K562 (cell line): ENCODE measurements at regions of chr1 and their contacts with region 1.

Region 1: GRCh38 chr1:155001675-155002463 is 733 bp upstream of the ZBTB7B start:
- DNase-seq: peak; percentile 90 to 100 (median 95)
- ATAC-seq: peak; percentile 81
- H3K4me3 ChIP-seq: peak overlapping the region; percentile 71
- H3K27ac ChIP-seq: peak overlapping the region; percentile 97
- H3K4me1 ChIP-seq: peaks cover 37 to 66% of the 10 kb centered on the region in 2 experiments
- H3K27me3 ChIP-seq: no peaks in the 10 kb centered on the region
- CTCF ChIP-seq: peak; percentile 60 to 70 (median 65)
- EP300 ChIP-seq: peak; percentile 32; the same call in 1 of the 2 replicates
- POLR2A ChIP-seq: 0 out of 2 replicates have a peak, but pooled peaks have one; percentile 56
- RAD21 ChIP-seq: peak; percentile 17 to 40; a peak in 2 of 4 replicates

Region 2: DNA sequence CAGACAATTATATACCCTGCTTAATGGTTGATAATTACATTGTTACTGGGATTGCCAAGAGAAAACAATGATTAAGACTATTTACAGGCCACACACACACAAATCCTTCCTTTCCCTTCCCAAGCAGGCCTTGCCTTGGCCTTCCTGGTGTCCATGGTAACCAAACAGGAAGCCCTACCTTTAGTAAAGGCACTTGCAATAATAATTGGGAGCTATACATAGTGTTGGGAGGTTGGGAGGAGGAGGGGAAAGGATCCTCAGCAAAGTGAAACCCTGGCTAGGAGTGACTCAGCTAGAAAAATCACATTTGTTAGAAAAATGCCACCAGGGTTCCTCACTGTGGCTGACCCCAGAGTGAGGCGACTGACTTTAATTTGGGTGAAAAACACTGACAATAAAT is 271.6 kb before region 1 on chr1:
- CTCF ChIA-PET with region 1: no interaction called
- POLR2A ChIA-PET with region 1: no interaction called
- in situ Hi-C with region 1: no loop called
- intact Hi-C with region 1: no loop called
- DNase-seq: no peak
- ATAC-seq: peak; percentile 39; the same call in 1 of the 3 replicates
- H3K4me3 ChIP-seq: no peak overlapping the region
- H3K27ac ChIP-seq: no peak overlapping the region
- H3K4me1 ChIP-seq: peaks cover 2 to 3% of the 10 kb centered on the region in 2 experiments; a peak in 3 of 5 replicates
- H3K27me3 ChIP-seq: peaks cover 30 to 66% of the 10 kb centered on the region in 2 experiments
- CTCF ChIP-seq: no peak
- EP300 ChIP-seq: no peak
- POLR2A ChIP-seq: no peak
- RAD21 ChIP-seq: no peak

Region 3: GRCh38 chr1:154961497-154962262 is 40.2 kb before region 1 on chr1 and contains the start of gene PYGO2:
- CTCF ChIA-PET with region 1: interaction called, 6 read pairs
- POLR2A ChIA-PET with region 1: interaction called, 9 read pairs
- in situ Hi-C with region 1: no loop called
- intact Hi-C with region 1: loop called (anchors 2 kb)
- DNase-seq: peak; percentile 86 to 93 (median 90)
- ATAC-seq: peak; percentile 91
- H3K4me3 ChIP-seq: peak within 1 kb of the TSS; percentile 91
- H3K27ac ChIP-seq: peak within 1 kb of the TSS; percentile 99
- H3K4me1 ChIP-seq: peaks cover 25 to 53% of the 10 kb centered on the region in 2 experiments
- H3K27me3 ChIP-seq: no peaks in the 10 kb centered on the region
- CTCF ChIP-seq: peak; percentile 64 to 86 (median 70)
- EP300 ChIP-seq: no peak
- POLR2A ChIP-seq: peak; percentile 92
- RAD21 ChIP-seq: peak; percentile 74 to 80
- polyA plus RNA-seq, gene PYGO2: 8.3 to 8.6 TPM

Region 4: DNA sequence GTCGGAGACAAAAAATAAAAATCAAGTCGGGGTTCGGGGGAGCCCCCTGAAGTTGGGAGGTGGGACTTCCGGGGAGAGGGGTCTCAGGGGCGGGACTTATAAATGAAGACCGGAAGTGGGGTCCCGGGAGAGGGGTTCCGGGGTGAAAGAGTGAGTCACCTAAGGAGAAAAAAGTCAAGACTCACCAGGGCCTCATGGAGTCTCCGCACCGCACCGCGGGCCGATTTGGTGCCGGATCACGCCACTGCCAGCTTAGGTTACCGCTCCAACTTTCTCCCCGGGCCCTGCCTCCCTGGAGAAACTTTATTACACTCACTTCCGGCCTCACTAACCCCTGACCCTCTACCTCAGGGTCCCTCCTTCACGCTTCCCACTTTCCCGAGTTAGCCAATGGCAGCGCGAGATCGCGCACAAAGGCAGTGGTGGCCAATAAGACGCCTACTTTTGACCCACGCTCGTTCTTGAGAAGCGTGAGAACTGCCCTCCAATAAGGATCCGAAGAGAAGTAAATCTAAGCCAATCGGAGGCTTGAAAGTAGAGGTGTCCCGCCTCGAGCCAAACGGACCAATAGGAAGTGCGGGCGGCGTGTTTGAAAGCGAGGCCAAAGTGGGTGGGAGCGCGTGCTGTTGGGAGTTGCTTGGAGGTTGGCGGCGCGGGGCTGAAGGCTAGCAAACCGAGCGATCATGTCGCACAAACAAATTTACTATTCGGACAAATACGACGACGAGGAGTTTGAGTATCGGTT is 27.6 kb before region 1 on chr1 and contains the start of gene CKS1B:
- CTCF ChIA-PET with region 1: interaction called, 5 read pairs
- POLR2A ChIA-PET with region 1: interaction called, 39 read pairs
- in situ Hi-C with region 1: no loop called
- intact Hi-C with region 1: loop called (anchors 1 kb)
- DNase-seq: peak; percentile 94 to 99 (median 97)
- ATAC-seq: peak; percentile 83
- H3K4me3 ChIP-seq: peak within 1 kb of the TSS; percentile 66
- H3K27ac ChIP-seq: peak within 1 kb of the TSS; percentile 99
- H3K4me1 ChIP-seq: peaks cover 45 to 50% of the 10 kb centered on the region in 2 experiments
- H3K27me3 ChIP-seq: no peaks in the 10 kb centered on the region; a peak in 1 of 5 replicates
- CTCF ChIP-seq: no peak
- EP300 ChIP-seq: no peak; the same call in 1 of the 2 replicates
- POLR2A ChIP-seq: peak; percentile 97
- RAD21 ChIP-seq: no peak
- polyA plus RNA-seq, gene CKS1B: 1,039 to 1,103 TPM

Region 5: GRCh38 chr1:154982897-154983648 is 18.8 kb before region 1 on chr1 and contains the start of gene FLAD1:
- CTCF ChIA-PET with region 1: interaction called, 3 read pairs
- POLR2A ChIA-PET with region 1: interaction called, 80 read pairs
- in situ Hi-C with region 1: no loop called
- intact Hi-C with region 1: no loop called
- DNase-seq: peak; percentile 95 to 99 (median 97)
- ATAC-seq: peak; percentile 98
- H3K4me3 ChIP-seq: peak within 1 kb of the TSS; percentile 60
- H3K27ac ChIP-seq: peak within 1 kb of the TSS; percentile 85
- H3K4me1 ChIP-seq: peaks cover 5 to 27% of the 10 kb centered on the region in 2 experiments; a peak in 4 of 5 replicates
- H3K27me3 ChIP-seq: no peaks in the 10 kb centered on the region
- CTCF ChIP-seq: 0 out of 6 replicates have a peak, but pooled peaks of 1 of the 3 experiments have one; percentile 6
- EP300 ChIP-seq: no peak
- POLR2A ChIP-seq: peak; percentile 95
- RAD21 ChIP-seq: no peak
- polyA plus RNA-seq, gene FLAD1: 24.9 to 46.7 TPM

Region 6: GRCh38 chr1:155017041-155017945 is 15.4 kb after region 1 on chr1:
- CTCF ChIA-PET with region 1: interaction called, 6 read pairs
- POLR2A ChIA-PET with region 1: interaction called, 8 read pairs
- in situ Hi-C with region 1: no loop called
- intact Hi-C with region 1: loop called (anchors 1 kb)
- DNase-seq: peak; percentile 90 to 96 (median 91)
- ATAC-seq: peak; percentile 93
- H3K4me3 ChIP-seq: peak overlapping the region; percentile 31
- H3K27ac ChIP-seq: peak overlapping the region; percentile 81
- H3K4me1 ChIP-seq: peaks cover 28 to 57% of the 10 kb centered on the region in 2 experiments
- H3K27me3 ChIP-seq: no peaks in the 10 kb centered on the region
- CTCF ChIP-seq: peak; percentile 100
- EP300 ChIP-seq: no peak
- POLR2A ChIP-seq: peak; percentile 63
- RAD21 ChIP-seq: peak; percentile 92 to 96

Region 7: GRCh38 chr1:155044812-155045690 is 43.2 kb after region 1 on chr1:
- CTCF ChIA-PET with region 1: no interaction called
- POLR2A ChIA-PET with region 1: interaction called, 3 read pairs
- in situ Hi-C with region 1: no loop called
- intact Hi-C with region 1: loop called (anchors 5 kb)
- DNase-seq: peak; percentile 65 to 81 (median 69)
- ATAC-seq: peak; percentile 93
- H3K4me3 ChIP-seq: no peak overlapping the region
- H3K27ac ChIP-seq: no peak overlapping the region
- H3K4me1 ChIP-seq: peaks cover 17 to 32% of the 10 kb centered on the region in 2 experiments
- H3K27me3 ChIP-seq: no peaks in the 10 kb centered on the region; a peak in 1 of 5 replicates
- CTCF ChIP-seq: peak; percentile 76 to 92 (median 84)
- EP300 ChIP-seq: no peak
- POLR2A ChIP-seq: no peak
- RAD21 ChIP-seq: peak; percentile 74 to 84

Region 8: GRCh38 chr1:155078469-155079209 is 76.8 kb after region 1 on chr1 and contains the start of gene EFNA3:
- CTCF ChIA-PET with region 1: interaction called, 3 read pairs
- POLR2A ChIA-PET with region 1: no interaction called
- in situ Hi-C with region 1: no loop called
- intact Hi-C with region 1: loop called (anchors 5 kb)
- DNase-seq: peak; percentile 86 to 98 (median 98)
- ATAC-seq: peak; percentile 74
- H3K4me3 ChIP-seq: peak within 1 kb of the TSS; percentile 51
- H3K27ac ChIP-seq: peak within 1 kb of the TSS; percentile 34
- H3K4me1 ChIP-seq: peaks cover 37 to 65% of the 10 kb centered on the region in 2 experiments
- H3K27me3 ChIP-seq: peaks cover 3 to 8% of the 10 kb centered on the region in 2 experiments; a peak in 2 of 5 replicates
- CTCF ChIP-seq: no peak
- EP300 ChIP-seq: no peak
- POLR2A ChIP-seq: no peak
- RAD21 ChIP-seq: no peak
- polyA plus RNA-seq, gene EFNA3: 0.59 to 0.63 TPM

Region 9: GRCh38 chr1:155103325-155103724 is 101.5 kb after region 1 on chr1:
- CTCF ChIA-PET with region 1: no interaction called
- POLR2A ChIA-PET with region 1: no interaction called
- in situ Hi-C with region 1: no loop called
- intact Hi-C with region 1: no loop called
- DNase-seq: no peak
- ATAC-seq: no peak
- H3K4me3 ChIP-seq: no peak overlapping the region
- H3K27ac ChIP-seq: no peak overlapping the region
- H3K4me1 ChIP-seq: peaks cover 7 to 12% of the 10 kb centered on the region in 2 experiments; a peak in 4 of 5 replicates
- H3K27me3 ChIP-seq: no peaks in the 10 kb centered on the region
- CTCF ChIP-seq: no peak
- EP300 ChIP-seq: no peak
- POLR2A ChIP-seq: no peak
- RAD21 ChIP-seq: no peak